MCF 10A (cell line): ENCODE measurements at regions of chr14 and their contacts with region 1.

Region 1: GRCh38 chr14:77862154-77862786 is 62.4 kb downstream of the ADCK1 start:
- DNase-seq: peak; percentile 58
- H3K4me3 Mint-ChIP-seq: no peak overlapping the region
- H3K27ac Mint-ChIP-seq: no peak overlapping the region
- H3K4me1 Mint-ChIP-seq: peaks cover 7% of the 10 kb centered on the region
- H3K27me3 Mint-ChIP-seq: no peaks in the 10 kb centered on the region
- CTCF ChIP-seq: peak; percentile 94

Region 2: DNA sequence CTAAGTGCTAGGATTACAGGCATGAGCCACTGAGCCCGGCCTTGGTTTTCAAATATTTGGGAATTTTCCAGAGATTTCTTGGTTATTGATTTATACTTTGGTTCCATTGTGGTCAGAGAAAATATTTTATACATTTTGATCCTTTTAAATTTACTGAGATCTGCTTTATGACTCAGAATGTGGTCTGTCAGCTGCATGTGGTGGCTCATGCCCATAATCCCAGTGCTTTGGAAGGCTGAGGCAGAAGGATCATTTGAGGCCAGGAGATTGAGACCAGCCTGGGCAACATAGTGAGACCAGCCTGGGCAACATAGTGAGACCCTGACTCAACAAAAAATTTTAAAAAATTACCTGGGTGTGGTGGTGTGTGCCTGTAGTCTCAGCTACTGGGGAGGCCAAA is 12.6 kb before region 1 on chr14:
- CTCF ChIA-PET with region 1: interaction called, 23 read pairs
- POLR2A ChIA-PET with region 1: no interaction called
- intact Hi-C with region 1: no loop called
- DNase-seq: no peak
- H3K4me3 Mint-ChIP-seq: no peak overlapping the region
- H3K27ac Mint-ChIP-seq: no peak overlapping the region
- H3K4me1 Mint-ChIP-seq: no peaks in the 10 kb centered on the region
- H3K27me3 Mint-ChIP-seq: no peaks in the 10 kb centered on the region
- CTCF ChIP-seq: no peak

Region 3: DNA sequence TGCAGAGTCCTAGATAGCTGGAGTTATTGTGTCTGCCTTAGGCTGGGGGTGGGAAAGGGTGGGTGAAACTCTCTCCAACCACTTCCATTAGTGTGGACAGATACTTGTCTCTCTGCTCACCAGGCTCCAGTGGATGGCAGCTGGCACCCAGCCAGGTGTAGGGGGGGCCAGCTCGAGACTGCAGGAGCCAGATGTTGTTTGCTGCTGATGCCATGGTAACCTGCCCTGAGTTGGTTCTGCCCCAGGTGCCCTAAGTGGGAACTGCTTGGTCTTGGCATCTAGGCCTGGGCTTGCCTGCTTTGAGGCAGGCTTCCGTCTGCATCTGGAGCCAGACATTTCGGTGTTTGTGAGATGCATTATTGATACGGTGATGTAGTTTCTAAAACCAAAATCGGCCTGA is 19.8 kb after region 1 on chr14:
- CTCF ChIA-PET with region 1: interaction called, 27 read pairs
- POLR2A ChIA-PET with region 1: no interaction called
- intact Hi-C with region 1: no loop called
- DNase-seq: no peak
- H3K4me3 Mint-ChIP-seq: no peak overlapping the region
- H3K27ac Mint-ChIP-seq: no peak overlapping the region
- H3K4me1 Mint-ChIP-seq: peaks cover 6% of the 10 kb centered on the region
- H3K27me3 Mint-ChIP-seq: no peaks in the 10 kb centered on the region
- CTCF ChIP-seq: no peak

Region 4: DNA sequence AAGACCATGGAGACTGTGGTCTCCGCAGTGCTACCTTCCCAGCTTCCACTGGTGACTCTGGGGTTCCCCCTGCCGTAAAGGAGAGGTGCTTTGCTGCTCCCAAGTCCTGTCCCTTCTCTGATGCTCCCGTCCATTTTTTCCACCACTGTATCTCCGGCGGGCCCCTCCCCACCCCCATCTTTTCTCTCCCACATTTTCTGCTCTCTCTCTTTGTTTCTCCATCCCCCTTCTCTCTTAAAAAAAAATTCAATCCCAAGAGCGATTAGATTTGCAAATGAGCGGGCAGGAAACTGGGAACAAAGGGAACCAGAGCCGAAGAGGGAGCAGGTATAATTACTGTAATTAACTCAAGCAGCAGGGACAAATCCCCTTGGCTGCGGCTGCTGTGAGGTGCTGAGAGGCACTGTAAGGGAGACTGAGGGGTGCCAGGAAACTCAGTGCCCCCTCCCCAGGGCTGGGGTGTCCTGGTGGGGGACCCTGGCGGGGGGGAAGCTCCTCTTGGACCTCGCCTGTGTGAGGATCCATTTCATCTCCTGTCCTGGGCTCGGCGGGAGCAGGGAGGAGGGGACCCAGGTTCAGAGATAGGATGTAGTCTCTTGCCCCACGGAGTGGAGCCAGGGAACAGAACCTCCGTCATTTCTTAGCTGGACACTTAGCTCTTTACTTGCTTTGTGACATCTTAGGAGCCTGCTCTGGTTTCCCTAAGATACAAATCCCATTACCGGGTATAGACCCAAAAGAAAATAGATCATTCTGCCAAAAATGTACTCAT is 167.5 kb after region 1 on chr14:
- CTCF ChIA-PET with region 1: interaction called, 10 read pairs
- POLR2A ChIA-PET with region 1: no interaction called
- intact Hi-C with region 1: loop called (anchors 1 kb)
- DNase-seq: no peak
- H3K4me3 Mint-ChIP-seq: no peak overlapping the region
- H3K27ac Mint-ChIP-seq: no peak overlapping the region
- H3K4me1 Mint-ChIP-seq: no peaks in the 10 kb centered on the region
- H3K27me3 Mint-ChIP-seq: peaks cover 11% of the 10 kb centered on the region
- CTCF ChIP-seq: no peak

Region 5: GRCh38 chr14:78153064-78153341 is 290.7 kb after region 1 on chr14:
- CTCF ChIA-PET with region 1: interaction called, 7 read pairs
- POLR2A ChIA-PET with region 1: no interaction called
- intact Hi-C with region 1: loop called (anchors 2 kb)
- DNase-seq: peak; percentile 68
- H3K4me3 Mint-ChIP-seq: no peak overlapping the region
- H3K27ac Mint-ChIP-seq: no peak overlapping the region
- H3K4me1 Mint-ChIP-seq: peaks cover 10% of the 10 kb centered on the region
- H3K27me3 Mint-ChIP-seq: peaks cover 49% of the 10 kb centered on the region
- CTCF ChIP-seq: peak; percentile 22

Region 6: GRCh38 chr14:78697341-78697740 is 835.1 kb after region 1 on chr14:
- CTCF ChIA-PET with region 1: interaction called, 6 read pairs
- POLR2A ChIA-PET with region 1: no interaction called
- intact Hi-C with region 1: loop called (anchors 5 kb)
- DNase-seq: peak; percentile 33
- H3K4me3 Mint-ChIP-seq: no peak overlapping the region
- H3K27ac Mint-ChIP-seq: no peak overlapping the region
- H3K4me1 Mint-ChIP-seq: no peaks in the 10 kb centered on the region
- H3K27me3 Mint-ChIP-seq: peaks cover 69% of the 10 kb centered on the region
- CTCF ChIP-seq: peak; percentile 69